Activated B cell treated with CpG ODN at 0.5 μM for 24 hours (primary cell): ENCODE measurements at regions of chr5 and their contacts with region 1.

Region 1: DNA sequence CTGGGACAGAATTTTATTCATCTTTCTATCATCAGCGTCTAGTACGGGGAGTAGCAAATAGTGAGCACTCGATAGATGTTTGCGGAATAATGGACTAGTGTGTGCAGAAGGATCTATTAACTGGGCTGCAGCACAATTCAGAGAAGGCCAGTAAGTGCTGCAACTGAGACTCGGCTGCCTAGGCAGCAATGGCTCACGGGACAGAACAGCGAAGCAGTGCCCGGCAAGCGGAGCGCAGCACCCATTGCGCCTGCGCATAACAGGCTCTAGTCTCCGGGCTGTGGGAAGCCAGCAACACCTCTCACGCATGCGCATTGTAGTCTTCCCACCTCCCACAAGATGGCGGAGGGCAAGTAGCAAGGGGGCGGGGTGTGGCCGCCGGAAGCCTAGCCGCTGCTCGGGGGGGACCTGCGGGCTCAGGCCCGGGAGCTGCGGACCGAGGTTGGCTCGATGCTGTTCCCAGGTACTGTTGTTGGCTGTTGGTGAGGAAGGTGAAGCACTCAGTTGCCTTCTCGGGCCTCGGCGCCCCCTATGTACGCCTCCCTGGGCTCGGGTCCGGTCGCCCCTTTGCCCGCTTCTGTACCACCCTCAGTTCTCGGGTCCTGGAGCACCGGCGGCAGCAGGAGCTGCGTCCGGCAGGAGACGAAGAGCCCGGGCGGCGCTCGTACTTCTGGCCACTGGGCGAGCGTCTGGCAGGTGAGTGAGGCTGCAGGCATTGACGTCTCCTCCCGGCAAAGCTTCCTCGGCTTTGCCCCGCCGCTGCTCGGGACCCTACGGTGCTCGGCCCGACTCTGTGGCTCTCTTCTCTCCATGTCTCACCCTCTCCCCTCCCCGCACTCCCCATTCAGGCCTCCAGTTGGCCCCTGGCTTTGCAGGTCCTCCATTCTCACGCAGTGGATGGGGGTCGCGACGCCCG is 30.2 kb upstream of the APC start:
- DNase-seq: peak; percentile 86
- ATAC-seq: peak; percentile 95
- H3K4me3 Mint-ChIP-seq: peak overlapping the region; percentile 95
- H3K27ac Mint-ChIP-seq: peak overlapping the region; percentile 87
- H3K4me1 Mint-ChIP-seq: peaks cover 49% of the 10 kb centered on the region
- H3K27me3 Mint-ChIP-seq: no peaks in the 10 kb centered on the region
- CTCF ChIP-seq: no peak

Region 2: DNA sequence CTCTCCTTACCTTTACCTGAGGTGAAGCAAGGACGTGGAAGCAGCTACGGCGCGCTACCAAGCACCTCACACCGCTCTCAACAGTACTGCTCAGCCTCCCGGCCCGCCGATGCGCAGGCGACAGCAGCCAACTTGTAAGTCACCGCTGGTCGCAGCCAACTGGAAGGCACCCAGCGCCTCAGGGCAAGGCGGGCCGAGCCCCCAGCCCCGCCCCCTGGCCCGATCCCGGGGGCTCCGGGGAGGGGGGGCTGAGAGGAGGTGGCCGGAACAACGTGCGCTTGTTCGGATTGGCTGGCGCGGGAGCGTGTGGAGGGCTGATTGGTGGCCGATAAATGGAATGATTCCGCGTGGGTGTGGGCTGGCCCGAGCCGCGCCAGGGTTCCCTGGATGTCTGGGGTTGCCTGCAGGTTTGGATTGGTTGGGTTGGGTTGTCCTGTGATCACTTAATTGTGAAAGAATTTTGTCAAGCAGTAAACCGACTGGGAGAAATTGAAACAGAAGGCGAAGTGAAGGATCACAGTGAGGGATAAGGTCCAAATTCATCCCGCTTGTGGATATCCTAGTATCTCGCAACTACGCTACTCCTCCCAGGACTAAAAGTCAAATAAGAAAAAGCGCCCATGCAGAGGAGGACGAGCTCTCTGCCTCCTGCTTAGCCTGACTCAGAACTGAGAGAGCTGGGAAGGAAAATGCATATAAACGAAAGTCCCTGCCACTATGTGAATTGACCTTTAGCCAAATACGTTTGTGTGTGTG is 1194.9 kb before region 1 on chr5 and contains the start of gene STARD4:
- CTCF ChIA-PET with region 1: no interaction called
- POLR2A ChIA-PET with region 1: no interaction called
- intact Hi-C with region 1: loop called (anchors 5 kb)
- DNase-seq: peak; percentile 94
- ATAC-seq: peak; percentile 96
- H3K4me3 Mint-ChIP-seq: peak within 1 kb of the TSS; percentile 99
- H3K27ac Mint-ChIP-seq: peak within 1 kb of the TSS; percentile 99
- H3K4me1 Mint-ChIP-seq: peaks cover 35% of the 10 kb centered on the region
- H3K27me3 Mint-ChIP-seq: no peaks in the 10 kb centered on the region
- CTCF ChIP-seq: no peak
- total RNA-seq, gene STARD4: 32.2 and 40.3 TPM in 2 replicates

Region 3: GRCh38 chr5:111697881-111698757 is 1009.3 kb before region 1 on chr5:
- CTCF ChIA-PET with region 1: no interaction called
- POLR2A ChIA-PET with region 1: no interaction called
- intact Hi-C with region 1: no loop called
- DNase-seq: no peak
- ATAC-seq: no peak
- H3K4me3 Mint-ChIP-seq: no peak overlapping the region
- H3K27ac Mint-ChIP-seq: no peak overlapping the region
- H3K4me1 Mint-ChIP-seq: no peaks in the 10 kb centered on the region
- H3K27me3 Mint-ChIP-seq: no peaks in the 10 kb centered on the region
- CTCF ChIP-seq: no peak

Region 4: GRCh38 chr5:112419986-112420864 is 287.2 kb before region 1 on chr5:
- CTCF ChIA-PET with region 1: no interaction called
- POLR2A ChIA-PET with region 1: no interaction called
- intact Hi-C with region 1: loop called (anchors 5 kb)
- DNase-seq: peak; percentile 68
- ATAC-seq: peak; percentile 84
- H3K4me3 Mint-ChIP-seq: peak overlapping the region; percentile 86
- H3K27ac Mint-ChIP-seq: no peak overlapping the region
- H3K4me1 Mint-ChIP-seq: peaks cover 11% of the 10 kb centered on the region
- H3K27me3 Mint-ChIP-seq: peaks cover 14% of the 10 kb centered on the region
- CTCF ChIP-seq: no peak

Region 5: GRCh38 chr5:112717506-112718082 is 10.1 kb after region 1 on chr5:
- CTCF ChIA-PET with region 1: no interaction called
- POLR2A ChIA-PET with region 1: no interaction called
- intact Hi-C with region 1: loop called (anchors 1 kb)
- DNase-seq: no peak
- ATAC-seq: no peak
- H3K4me3 Mint-ChIP-seq: no peak overlapping the region
- H3K27ac Mint-ChIP-seq: no peak overlapping the region
- H3K4me1 Mint-ChIP-seq: peaks cover 57% of the 10 kb centered on the region
- H3K27me3 Mint-ChIP-seq: no peaks in the 10 kb centered on the region
- CTCF ChIP-seq: no peak

Region 6: DNA sequence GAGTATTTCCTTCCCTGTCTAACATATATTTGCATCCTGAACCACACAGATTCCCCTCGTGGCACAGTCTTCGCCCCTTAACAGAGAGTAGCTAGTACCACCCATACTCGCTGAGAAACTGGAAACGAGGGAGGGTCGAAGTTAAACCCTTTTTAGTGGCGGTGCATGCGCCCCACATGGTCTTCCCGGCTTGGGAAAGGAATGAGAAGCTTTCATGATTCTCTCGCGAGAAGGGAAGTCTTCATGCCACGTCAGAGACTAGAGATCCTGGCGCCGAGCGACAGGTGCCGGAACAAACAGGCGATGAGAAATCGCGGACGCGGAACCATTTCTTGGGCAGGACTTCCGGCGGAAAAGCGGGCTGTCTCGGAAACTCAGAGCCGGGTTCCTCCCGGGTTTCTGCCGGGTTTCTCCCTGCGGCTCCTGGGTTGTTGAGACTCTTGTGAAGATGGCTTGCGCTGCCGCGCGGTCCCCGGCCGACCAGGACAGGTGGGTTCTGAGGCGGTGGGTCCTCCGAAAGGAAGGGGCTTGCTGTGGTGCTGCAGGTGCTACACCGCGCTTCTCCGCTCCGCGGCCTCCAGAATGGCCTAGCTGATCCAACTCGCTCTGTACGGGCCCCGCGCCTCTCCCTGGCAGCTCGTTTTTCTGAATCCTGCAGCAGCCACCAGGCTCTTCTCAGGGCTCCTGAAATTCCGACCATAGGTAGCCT is 153.6 kb after region 1 on chr5 and contains the start of gene SRP19:
- CTCF ChIA-PET with region 1: no interaction called
- POLR2A ChIA-PET with region 1: interaction called, 5 read pairs
- intact Hi-C with region 1: loop called (anchors 1 kb)
- DNase-seq: peak; percentile 83
- ATAC-seq: peak; percentile 94
- H3K4me3 Mint-ChIP-seq: peak within 1 kb of the TSS; percentile 96
- H3K27ac Mint-ChIP-seq: peak within 1 kb of the TSS; percentile 96
- H3K4me1 Mint-ChIP-seq: peaks cover 34% of the 10 kb centered on the region
- H3K27me3 Mint-ChIP-seq: peaks cover 4% of the 10 kb centered on the region
- CTCF ChIP-seq: no peak
- total RNA-seq, gene SRP19: 50.4 and 51.6 TPM in 2 replicates

Region 7: DNA sequence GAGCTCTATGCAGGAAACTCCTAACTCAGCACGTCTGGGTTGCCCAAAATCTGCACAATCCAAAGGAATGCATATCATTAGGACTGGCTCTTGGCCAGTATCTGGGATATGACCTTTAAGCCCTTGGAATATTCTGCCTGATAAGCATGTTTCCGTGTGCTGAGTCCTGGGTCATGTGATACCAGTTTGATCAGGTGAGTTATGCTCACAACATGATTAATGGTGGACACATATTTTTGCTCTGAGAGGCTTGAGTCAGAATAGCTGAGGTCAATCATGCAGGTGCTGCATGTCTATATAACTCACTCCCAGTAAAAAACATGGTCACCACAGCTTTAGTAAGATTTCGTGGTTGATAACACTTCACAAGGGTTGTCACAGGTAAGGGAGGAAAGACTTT is 1214.9 kb after region 1 on chr5:
- CTCF ChIA-PET with region 1: no interaction called
- POLR2A ChIA-PET with region 1: no interaction called
- intact Hi-C with region 1: no loop called
- DNase-seq: no peak
- ATAC-seq: no peak
- H3K4me3 Mint-ChIP-seq: no peak overlapping the region
- H3K27ac Mint-ChIP-seq: no peak overlapping the region
- H3K4me1 Mint-ChIP-seq: no peaks in the 10 kb centered on the region
- H3K27me3 Mint-ChIP-seq: no peaks in the 10 kb centered on the region
- CTCF ChIP-seq: no peak

Region 8: DNA sequence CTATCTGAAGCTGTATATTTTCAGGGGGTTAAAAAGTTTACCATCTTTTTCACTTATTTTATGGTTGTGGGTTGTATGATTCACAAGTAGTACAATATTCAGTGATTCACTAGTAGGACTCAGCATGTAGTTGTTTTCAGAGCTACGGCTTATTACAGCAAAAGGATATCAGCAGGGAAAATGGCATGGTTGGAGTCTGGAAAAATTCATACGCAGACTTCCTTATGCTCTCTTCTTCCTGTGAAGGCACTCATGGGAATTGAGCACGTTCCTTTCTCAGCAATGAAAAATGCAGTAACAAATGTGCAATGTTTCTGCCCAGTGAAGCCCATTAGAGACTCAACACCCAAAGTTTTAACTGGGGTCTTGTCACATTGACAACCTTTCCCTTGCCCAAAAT is 1905.0 kb after region 1 on chr5:
- CTCF ChIA-PET with region 1: no interaction called
- POLR2A ChIA-PET with region 1: no interaction called
- intact Hi-C with region 1: no loop called
- DNase-seq: no peak
- ATAC-seq: no peak
- H3K4me3 Mint-ChIP-seq: no peak overlapping the region
- H3K27ac Mint-ChIP-seq: no peak overlapping the region
- H3K4me1 Mint-ChIP-seq: no peaks in the 10 kb centered on the region
- H3K27me3 Mint-ChIP-seq: no peaks in the 10 kb centered on the region
- CTCF ChIP-seq: no peak